Activated CD8-positive, alpha-beta memory T cell treated with anti-CD3 and anti-CD28 coated beads, Interleukin-2, amount 10 ng/mL, durations not matched to agents 7 days and 5 days (primary cell): ENCODE measurements at regions of chr17 and their contacts with region 1.

Region 1: DNA sequence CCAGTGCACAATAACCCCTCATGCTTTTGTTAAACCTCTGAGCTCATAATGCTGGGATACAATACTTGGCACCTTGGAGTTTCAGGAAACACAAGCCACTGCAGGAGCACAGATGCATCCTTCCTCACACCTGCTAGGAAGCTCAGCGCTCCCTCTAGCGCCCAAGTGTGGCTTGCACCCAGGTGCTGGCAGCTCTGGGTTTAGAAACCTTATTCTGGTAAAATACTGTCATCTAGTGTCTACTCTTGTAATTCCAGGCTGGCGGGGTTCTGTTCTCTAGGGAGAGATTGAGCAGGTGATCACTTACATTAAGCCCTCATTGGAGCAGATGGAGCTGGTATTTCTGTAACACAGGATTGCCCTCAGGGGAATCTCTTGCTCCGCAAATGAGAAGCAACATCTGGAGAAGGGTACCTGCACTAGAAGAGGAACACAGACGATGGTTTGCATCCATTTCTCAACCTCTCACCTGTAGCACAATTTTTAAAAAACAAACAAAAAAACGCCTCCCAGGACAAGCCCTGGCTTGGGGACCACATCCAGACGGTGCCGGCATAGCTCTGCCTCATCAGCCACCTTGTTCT is 1.5 kb downstream of the CCL1 start:
- DNase-seq: peak; percentile 91
- ATAC-seq: peak; percentile 92
- H3K4me3 Mint-ChIP-seq: no peak overlapping the region
- H3K27ac Mint-ChIP-seq: no peak overlapping the region
- H3K4me1 Mint-ChIP-seq: peaks cover 59% of the 10 kb centered on the region
- H3K27me3 Mint-ChIP-seq: peaks cover 51% of the 10 kb centered on the region

Region 2: DNA sequence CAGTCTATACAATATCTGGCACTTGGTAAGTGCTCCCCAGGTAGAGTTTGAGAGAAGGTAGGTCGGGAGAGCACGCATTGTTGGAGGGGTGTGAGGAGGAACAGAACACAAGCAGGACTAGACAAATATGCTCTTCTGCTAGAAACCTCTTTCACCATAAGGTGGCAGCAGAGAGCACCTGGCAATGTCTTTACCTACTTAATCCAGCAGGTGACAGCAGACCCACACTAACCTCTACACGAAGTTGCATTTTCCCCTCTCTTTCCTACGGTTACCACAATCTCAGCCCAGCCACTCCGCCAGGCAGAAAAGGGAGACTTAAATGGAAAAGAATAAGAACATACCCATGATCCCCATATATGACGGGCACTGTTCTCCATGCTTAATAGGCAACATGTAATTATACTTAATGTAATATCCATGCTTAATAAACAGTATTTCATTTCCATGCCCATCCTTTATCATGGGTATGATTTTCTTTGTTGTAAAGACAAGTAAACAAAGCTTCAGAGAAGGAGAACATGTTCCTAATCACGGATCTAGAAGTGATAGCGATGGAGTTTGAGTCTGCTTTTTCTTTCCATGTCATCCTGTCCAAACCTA is 161.5 kb before region 1 on chr17:
- CTCF ChIA-PET with region 1: interaction called, 262 read pairs
- DNase-seq: peak; percentile 81
- ATAC-seq: peak; percentile 77
- H3K4me3 Mint-ChIP-seq: no peak overlapping the region
- H3K27ac Mint-ChIP-seq: no peak overlapping the region
- H3K4me1 Mint-ChIP-seq: peaks cover 27% of the 10 kb centered on the region
- H3K27me3 Mint-ChIP-seq: peaks cover 72% of the 10 kb centered on the region

Region 3: GRCh38 chr17:34318474-34318873 is 43.1 kb before region 1 on chr17:
- CTCF ChIA-PET with region 1: interaction called, 21 read pairs
- DNase-seq: no peak
- ATAC-seq: no peak
- H3K4me3 Mint-ChIP-seq: no peak overlapping the region
- H3K27ac Mint-ChIP-seq: no peak overlapping the region
- H3K4me1 Mint-ChIP-seq: no peaks in the 10 kb centered on the region
- H3K27me3 Mint-ChIP-seq: peaks cover 48% of the 10 kb centered on the region

Region 4: DNA sequence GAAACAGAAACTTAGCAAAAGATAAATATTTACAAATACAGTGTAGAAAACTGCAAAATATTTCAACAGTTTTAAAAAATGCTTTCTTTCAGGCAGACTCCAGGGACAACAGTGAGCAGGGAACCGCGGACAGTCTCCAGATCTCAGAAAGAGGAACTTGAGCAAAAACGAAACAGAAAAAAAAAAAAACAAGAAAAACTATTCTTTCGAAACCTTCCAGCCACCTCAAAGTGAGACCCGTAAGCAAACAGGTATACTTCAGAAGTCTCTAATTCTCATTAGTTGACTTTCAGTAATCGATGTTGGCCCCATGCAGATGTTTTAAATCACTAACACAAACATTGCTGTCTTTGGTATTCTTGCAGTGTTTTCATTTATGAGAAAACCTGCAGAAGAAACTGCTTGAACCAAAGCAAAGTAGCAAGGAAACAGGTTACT is 17.1 kb after region 1 on chr17:
- CTCF ChIA-PET with region 1: interaction called, 92 read pairs
- DNase-seq: peak; percentile 72
- ATAC-seq: peak; percentile 80
- H3K4me3 Mint-ChIP-seq: peak overlapping the region; percentile 63
- H3K27ac Mint-ChIP-seq: peak overlapping the region; percentile 85
- H3K4me1 Mint-ChIP-seq: peaks cover 68% of the 10 kb centered on the region
- H3K27me3 Mint-ChIP-seq: peaks cover 3% of the 10 kb centered on the region

Region 5: GRCh38 chr17:34393401-34393800 is 31.8 kb after region 1 on chr17:
- CTCF ChIA-PET with region 1: interaction called, 92 read pairs
- DNase-seq: no peak
- ATAC-seq: no peak
- H3K4me3 Mint-ChIP-seq: no peak overlapping the region
- H3K27ac Mint-ChIP-seq: no peak overlapping the region
- H3K4me1 Mint-ChIP-seq: peaks cover 40% of the 10 kb centered on the region
- H3K27me3 Mint-ChIP-seq: peaks cover 8% of the 10 kb centered on the region

Region 6: GRCh38 chr17:34420254-34420766 is 58.7 kb after region 1 on chr17:
- CTCF ChIA-PET with region 1: interaction called, 52 read pairs
- DNase-seq: peak; percentile 75
- ATAC-seq: peak; percentile 45
- H3K4me3 Mint-ChIP-seq: no peak overlapping the region
- H3K27ac Mint-ChIP-seq: no peak overlapping the region
- H3K4me1 Mint-ChIP-seq: no peaks in the 10 kb centered on the region
- H3K27me3 Mint-ChIP-seq: peaks cover 60% of the 10 kb centered on the region